ENCODE measurements at regions of chr3 and their contacts with region 1.

Region 1: DNA sequence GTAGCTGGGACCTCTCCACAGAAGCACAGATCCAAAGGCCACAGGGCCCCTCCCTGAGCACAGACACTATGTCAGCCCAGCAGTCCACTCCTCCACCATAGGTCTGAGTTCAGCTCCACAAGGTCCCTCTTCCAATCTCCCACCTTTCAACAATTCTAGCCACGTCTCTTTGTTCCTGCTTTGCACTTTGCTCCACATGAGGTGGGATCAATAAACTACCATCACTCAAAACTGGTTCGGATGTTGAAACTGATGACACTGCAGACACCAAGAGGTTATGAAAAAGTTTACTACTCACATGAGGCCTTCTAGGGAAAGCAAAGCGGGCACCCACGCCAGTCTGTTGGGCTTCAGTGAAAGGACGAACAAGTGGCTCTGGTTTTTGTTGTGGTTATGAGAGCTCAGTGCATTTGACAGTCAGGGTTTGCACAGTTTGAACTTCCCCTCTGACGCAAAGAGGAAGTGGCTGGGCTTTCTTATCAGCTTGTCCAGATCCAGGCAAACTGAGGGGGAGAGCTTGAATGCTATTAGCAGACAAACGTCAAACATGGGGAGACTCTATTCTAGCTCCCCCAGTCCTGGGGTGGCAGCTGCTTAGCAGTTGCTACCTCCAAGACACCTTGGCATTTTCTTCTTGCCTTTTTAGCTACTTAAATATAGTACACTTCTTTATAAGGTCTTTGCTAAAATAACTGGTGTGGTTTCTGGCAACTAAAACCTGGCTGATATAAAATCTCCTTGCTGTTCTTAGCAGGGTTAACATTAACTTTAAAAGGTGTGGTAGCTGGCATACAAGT is 37.8 kb downstream of the ZNF445 start:
- DNase-seq: peak; percentile 6 to 85 (median 64)
- ATAC-seq: peak; percentile 82 to 89 (median 88)
- H3K4me3 ChIP-seq: peak overlapping the region; percentile 14 to 40
- H3K4me3 Mint-ChIP-seq: peak overlapping the region; percentile 54 to 68 (median 60)
- H3K27ac ChIP-seq: peak overlapping the region; percentile 88
- H3K27ac Mint-ChIP-seq: peak overlapping the region; percentile 92 to 95
- H3K4me1 ChIP-seq: peaks cover 12 to 24% of the 10 kb centered on the region in 2 experiments
- H3K4me1 Mint-ChIP-seq: peaks cover 24 to 45% (median 42%) of the 10 kb centered on the region in 3 donors
- H3K27me3 ChIP-seq: no peaks in the 10 kb centered on the region
- H3K27me3 Mint-ChIP-seq: no peaks in the 10 kb centered on the region

Region 2: DNA sequence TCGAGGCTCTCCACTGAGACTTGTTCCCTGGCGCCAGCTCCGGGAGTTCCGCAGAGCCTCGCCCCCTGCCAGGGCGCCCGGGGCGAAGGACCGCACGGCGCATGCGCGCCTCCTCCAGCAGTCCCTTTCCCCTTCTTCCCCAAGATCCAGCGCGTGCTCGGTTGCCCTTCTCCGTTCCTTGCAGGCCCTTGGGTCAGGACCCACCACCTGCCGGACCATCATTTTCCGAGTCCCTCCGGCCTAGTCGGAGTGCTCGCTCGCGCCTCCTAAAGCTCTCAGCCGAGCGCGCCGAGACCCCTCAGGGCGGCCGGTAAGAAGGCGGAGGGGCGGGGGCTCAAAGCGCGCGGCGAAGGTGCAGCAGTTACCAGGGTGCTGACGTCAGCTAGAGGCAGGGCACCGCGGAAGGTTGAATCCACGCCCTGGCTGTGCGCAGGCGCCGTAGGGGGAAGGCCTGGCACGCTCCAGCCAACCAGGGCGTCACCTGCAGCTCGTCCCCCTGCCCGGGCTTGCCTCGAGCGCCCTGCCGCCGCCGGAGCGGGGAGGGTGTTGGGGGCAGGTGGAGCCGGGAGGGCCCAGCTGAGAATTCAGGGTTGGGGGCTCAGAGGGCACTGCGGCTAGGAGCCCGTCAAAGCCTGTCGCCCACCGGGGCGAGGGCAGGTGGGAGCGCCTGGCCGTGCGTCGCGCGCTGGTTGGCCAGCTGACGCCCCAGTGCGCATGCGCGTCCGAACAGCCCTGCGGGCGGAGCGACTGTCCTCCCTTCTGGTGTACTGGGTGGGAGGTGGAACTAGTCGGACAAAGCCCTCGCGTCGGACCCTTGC is 101.5 kb before region 1 on chr3 and contains the start of gene TCAIM:
- CTCF ChIA-PET with region 1: interaction called in 1 of 2 experiments, 5 read pairs
- POLR2A ChIA-PET with region 1: interaction called, 3 to 28 read pairs
- DNase-seq: peak; percentile 97 to 100 (median 99)
- ATAC-seq: peak; percentile 91 to 94 (median 94)
- H3K4me3 ChIP-seq: peak within 1 kb of the TSS; percentile 95 to 98
- H3K4me3 Mint-ChIP-seq: peak within 1 kb of the TSS; percentile 96 to 97 (median 97)
- H3K27ac ChIP-seq: peak within 1 kb of the TSS; percentile 91
- H3K27ac Mint-ChIP-seq: peak within 1 kb of the TSS; percentile 96 to 97
- H3K4me1 ChIP-seq: peaks cover 17 to 21% of the 10 kb centered on the region in 2 experiments
- H3K4me1 Mint-ChIP-seq: peaks cover 31 to 34% (median 31%) of the 10 kb centered on the region in 3 donors
- H3K27me3 ChIP-seq: no peaks in the 10 kb centered on the region
- H3K27me3 Mint-ChIP-seq: peaks cover 5 to 6% of the 10 kb centered on the region in 2 donors
- total RNA-seq, gene TCAIM: 8.4 to 16.5 (median 13.4) TPM

Region 3: GRCh38 chr3:44387404-44387803 is 52.3 kb before region 1 on chr3:
- CTCF ChIA-PET with region 1: no interaction called
- POLR2A ChIA-PET with region 1: interaction called in 1 of 2 experiments, 22 read pairs
- DNase-seq: no peak
- ATAC-seq: no peak
- H3K4me3 ChIP-seq: no peak overlapping the region
- H3K4me3 Mint-ChIP-seq: no peak overlapping the region
- H3K27ac ChIP-seq: no peak overlapping the region
- H3K27ac Mint-ChIP-seq: no peak overlapping the region
- H3K4me1 ChIP-seq: no peaks in the 10 kb centered on the region
- H3K4me1 Mint-ChIP-seq: no peaks in the 10 kb centered on the region
- H3K27me3 ChIP-seq: no peaks in the 10 kb centered on the region
- H3K27me3 Mint-ChIP-seq: no peaks in the 10 kb centered on the region

Region 4: GRCh38 chr3:44418549-44418948 is 21.1 kb before region 1 on chr3:
- CTCF ChIA-PET with region 1: no interaction called
- POLR2A ChIA-PET with region 1: no interaction called
- DNase-seq: no peak
- ATAC-seq: no peak
- H3K4me3 ChIP-seq: no peak overlapping the region
- H3K4me3 Mint-ChIP-seq: no peak overlapping the region
- H3K27ac ChIP-seq: no peak overlapping the region
- H3K27ac Mint-ChIP-seq: no peak overlapping the region
- H3K4me1 ChIP-seq: no peaks in the 10 kb centered on the region
- H3K4me1 Mint-ChIP-seq: peaks cover 0 to 4% (median 0%) of the 10 kb centered on the region in 3 donors
- H3K27me3 ChIP-seq: peaks cover 0 to 13% of the 10 kb centered on the region in 2 experiments
- H3K27me3 Mint-ChIP-seq: peaks cover 0 to 6% of the 10 kb centered on the region in 2 donors